Activated CD4-positive, alpha-beta memory T cell treated with anti-CD3 and anti-CD28 coated beads, Interleukin-2, amount 10 ng/mL, durations not matched to agents 7 days and 5 days (primary cell): ENCODE measurements at regions of chr2 and their contacts with region 1.

Region 1: DNA sequence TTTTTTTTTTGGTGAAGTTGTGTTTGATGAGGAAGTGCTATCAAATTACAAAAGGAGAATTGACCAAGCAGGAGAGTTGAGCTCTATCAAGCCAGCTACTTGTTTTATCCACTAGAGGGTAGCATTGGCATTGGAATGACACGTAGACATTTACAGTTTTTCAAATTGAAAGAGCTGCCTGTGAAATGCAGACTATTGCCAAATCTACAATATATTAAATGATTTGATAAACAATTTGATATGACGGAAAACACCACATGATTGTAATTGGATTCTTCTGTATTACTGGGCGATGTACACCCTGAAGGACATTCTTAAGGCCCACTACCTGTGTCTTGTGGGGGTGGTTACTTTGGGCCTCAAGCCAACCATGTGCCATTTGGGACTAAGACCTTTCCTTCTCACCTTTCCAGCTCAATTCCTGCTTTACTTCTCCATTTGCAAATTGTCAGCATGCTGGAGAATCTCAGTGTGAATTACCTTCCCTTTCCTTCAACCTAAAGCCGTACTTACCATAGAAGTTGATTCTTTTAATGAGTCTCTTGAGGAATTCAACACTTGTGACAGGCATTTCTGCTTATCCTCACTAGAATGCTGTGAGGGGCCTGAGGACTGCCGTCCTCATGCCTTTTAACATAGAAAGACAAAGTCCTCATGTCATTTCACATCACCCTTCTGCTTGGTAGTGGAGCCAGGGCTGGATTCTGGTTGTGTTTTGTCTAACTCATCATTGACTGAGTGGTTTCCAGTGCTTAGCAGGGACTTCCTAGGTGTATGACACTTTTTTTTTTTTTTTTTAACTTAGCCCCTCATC is 134.8 kb upstream of the THUMPD2 start:
- DNase-seq: no peak
- H3K4me3 Mint-ChIP-seq: no peak overlapping the region
- H3K27ac Mint-ChIP-seq: no peak overlapping the region
- H3K4me1 Mint-ChIP-seq: peaks cover 14% of the 10 kb centered on the region
- H3K27me3 Mint-ChIP-seq: peaks cover 12% of the 10 kb centered on the region

Region 2: GRCh38 chr2:39871291-39871761 is 42.5 kb before region 1 on chr2:
- CTCF ChIA-PET with region 1: no interaction called
- POLR2A ChIA-PET with region 1: no interaction called
- DNase-seq: no peak
- H3K4me3 Mint-ChIP-seq: no peak overlapping the region
- H3K27ac Mint-ChIP-seq: no peak overlapping the region
- H3K4me1 Mint-ChIP-seq: no peaks in the 10 kb centered on the region
- H3K27me3 Mint-ChIP-seq: no peaks in the 10 kb centered on the region

Region 3: GRCh38 chr2:40554668-40555285 is 640.9 kb after region 1 on chr2:
- CTCF ChIA-PET with region 1: interaction called, 50 read pairs
- POLR2A ChIA-PET with region 1: no interaction called
- DNase-seq: peak; percentile 49
- H3K4me3 Mint-ChIP-seq: no peak overlapping the region
- H3K27ac Mint-ChIP-seq: no peak overlapping the region
- H3K4me1 Mint-ChIP-seq: no peaks in the 10 kb centered on the region
- H3K27me3 Mint-ChIP-seq: no peaks in the 10 kb centered on the region